Activated naive CD4-positive, alpha-beta T cell treated with anti-CD3 and anti-CD28 coated beads for 36 hours (primary cell): ENCODE measurements at regions of chr1 and their contacts with region 1.

Region 1: DNA sequence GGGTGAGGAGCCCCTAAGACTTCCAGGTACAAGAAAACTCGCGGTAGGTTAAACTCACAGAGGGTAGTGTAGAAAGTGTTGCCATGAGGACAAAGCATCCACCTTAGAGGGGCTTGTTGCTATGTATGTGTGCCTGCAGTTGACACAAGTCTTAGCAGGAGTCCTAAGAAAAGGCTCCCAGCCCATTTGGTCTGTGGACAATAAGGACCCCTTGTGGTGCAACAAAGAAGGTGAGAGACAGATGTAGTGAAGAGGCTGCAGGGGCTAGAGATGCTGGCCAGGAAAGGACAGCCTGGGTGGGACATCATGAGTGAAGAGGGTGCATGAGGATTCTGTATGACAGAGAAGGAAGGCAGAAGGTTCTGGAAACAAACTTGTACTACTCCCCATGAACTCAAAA is 36.3 kb upstream of the IL10 start:
- DNase-seq: peak; percentile 70
- H3K4me3 Mint-ChIP-seq: no peak overlapping the region
- H3K27ac Mint-ChIP-seq: no peak overlapping the region
- H3K4me1 Mint-ChIP-seq: peaks cover 42% of the 10 kb centered on the region
- H3K27me3 Mint-ChIP-seq: no peaks in the 10 kb centered on the region

Region 2: GRCh38 chr1:206489980-206490770 is 318.4 kb before region 1 on chr1:
- CTCF ChIA-PET with region 1: interaction called, 6 read pairs
- intact Hi-C with region 1: loop called (anchors 5 kb)
- DNase-seq: peak; percentile 87
- H3K4me3 Mint-ChIP-seq: no peak overlapping the region
- H3K27ac Mint-ChIP-seq: no peak overlapping the region
- H3K4me1 Mint-ChIP-seq: no peaks in the 10 kb centered on the region
- H3K27me3 Mint-ChIP-seq: no peaks in the 10 kb centered on the region

Region 3: DNA sequence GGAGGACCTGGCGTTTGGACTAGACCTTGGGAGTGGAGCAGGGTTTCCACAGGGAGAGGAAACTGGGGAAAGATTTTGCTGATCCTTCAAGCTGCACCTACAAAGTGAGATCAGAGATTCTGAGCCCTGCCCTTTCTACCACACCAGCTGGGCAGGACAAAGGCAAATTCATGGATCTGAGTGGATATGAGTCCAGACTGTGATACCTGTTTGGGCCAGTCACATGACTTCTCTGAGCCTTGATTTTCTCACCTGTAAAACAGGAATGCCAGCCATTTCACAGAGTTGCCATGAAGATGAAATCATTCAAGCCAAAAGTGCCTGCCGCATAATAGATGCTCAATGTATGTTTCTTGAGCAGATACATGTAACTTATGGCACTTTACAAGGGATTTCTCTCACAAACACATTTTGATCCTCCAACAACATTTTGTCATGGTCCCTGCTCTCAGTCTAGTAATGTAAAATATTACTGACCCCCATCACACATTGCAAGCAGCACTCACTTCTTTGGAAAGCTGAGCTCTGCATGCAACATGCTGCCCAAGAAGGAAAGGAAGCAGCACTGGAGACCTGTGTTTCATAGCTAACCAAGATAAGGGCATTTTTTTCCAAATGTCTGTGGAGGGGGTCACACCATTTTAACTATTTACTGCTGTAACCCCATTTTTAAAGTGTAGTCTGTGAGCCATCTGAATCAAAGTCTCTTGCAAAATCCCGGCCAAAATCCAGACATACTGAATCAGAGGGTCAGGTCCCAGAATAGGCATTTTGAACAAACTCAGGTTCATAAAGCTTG is 306.0 kb before region 1 on chr1:
- CTCF ChIA-PET with region 1: no interaction called
- intact Hi-C with region 1: no loop called
- DNase-seq: no peak
- H3K4me3 Mint-ChIP-seq: no peak overlapping the region
- H3K27ac Mint-ChIP-seq: no peak overlapping the region
- H3K4me1 Mint-ChIP-seq: peaks cover 34% of the 10 kb centered on the region
- H3K27me3 Mint-ChIP-seq: no peaks in the 10 kb centered on the region

Region 4: GRCh38 chr1:206635080-206635977 is 173.3 kb before region 1 on chr1 and contains the start of gene DYRK3:
- CTCF ChIA-PET with region 1: interaction called, 14 read pairs
- intact Hi-C with region 1: loop called (anchors 1 kb)
- DNase-seq: peak; percentile 93
- H3K4me3 Mint-ChIP-seq: peak within 1 kb of the TSS; percentile 83
- H3K27ac Mint-ChIP-seq: peak within 1 kb of the TSS; percentile 92
- H3K4me1 Mint-ChIP-seq: peaks cover 27% of the 10 kb centered on the region
- H3K27me3 Mint-ChIP-seq: peaks cover 21% of the 10 kb centered on the region
- total RNA-seq, gene DYRK3: 6.5 to 6.7 TPM

Region 5: GRCh38 chr1:206725109-206725963 is 83.3 kb before region 1 on chr1:
- CTCF ChIA-PET with region 1: interaction called, 116 read pairs
- intact Hi-C with region 1: loop called (anchors 1 kb)
- DNase-seq: peak; percentile 84
- H3K4me3 Mint-ChIP-seq: no peak overlapping the region
- H3K27ac Mint-ChIP-seq: no peak overlapping the region
- H3K4me1 Mint-ChIP-seq: peaks cover 39% of the 10 kb centered on the region
- H3K27me3 Mint-ChIP-seq: no peaks in the 10 kb centered on the region

Region 6: GRCh38 chr1:206797534-206798383 is 10.9 kb before region 1 on chr1:
- CTCF ChIA-PET with region 1: interaction called, 12 read pairs
- intact Hi-C with region 1: no loop called
- DNase-seq: no peak
- H3K4me3 Mint-ChIP-seq: no peak overlapping the region
- H3K27ac Mint-ChIP-seq: no peak overlapping the region
- H3K4me1 Mint-ChIP-seq: peaks cover 40% of the 10 kb centered on the region
- H3K27me3 Mint-ChIP-seq: peaks cover 7% of the 10 kb centered on the region

Region 7: GRCh38 chr1:206918076-206918475 is 109.5 kb after region 1 on chr1:
- CTCF ChIA-PET with region 1: interaction called, 157 read pairs
- intact Hi-C with region 1: no loop called
- DNase-seq: no peak
- H3K4me3 Mint-ChIP-seq: peak overlapping the region; percentile 59
- H3K27ac Mint-ChIP-seq: peak overlapping the region; percentile 82
- H3K4me1 Mint-ChIP-seq: peaks cover 51% of the 10 kb centered on the region
- H3K27me3 Mint-ChIP-seq: no peaks in the 10 kb centered on the region